ENCODE measurements at regions of chr13 and their contacts with region 1.

Region 1: GRCh38 chr13:37602747-37603381 is 4.3 kb upstream of the POSTN start:
- DNase-seq: no peak
- H3K4me3 ChIP-seq: no peak overlapping the region
- H3K27ac ChIP-seq: no peak overlapping the region
- H3K4me1 ChIP-seq: no peaks in the 10 kb centered on the region
- H3K27me3 ChIP-seq: no peaks in the 10 kb centered on the region
- CTCF ChIP-seq: peak in 3 of 4 experiments; percentile 41 to 52 (median 41)
- POLR2A ChIP-seq: no peak

Region 2: DNA sequence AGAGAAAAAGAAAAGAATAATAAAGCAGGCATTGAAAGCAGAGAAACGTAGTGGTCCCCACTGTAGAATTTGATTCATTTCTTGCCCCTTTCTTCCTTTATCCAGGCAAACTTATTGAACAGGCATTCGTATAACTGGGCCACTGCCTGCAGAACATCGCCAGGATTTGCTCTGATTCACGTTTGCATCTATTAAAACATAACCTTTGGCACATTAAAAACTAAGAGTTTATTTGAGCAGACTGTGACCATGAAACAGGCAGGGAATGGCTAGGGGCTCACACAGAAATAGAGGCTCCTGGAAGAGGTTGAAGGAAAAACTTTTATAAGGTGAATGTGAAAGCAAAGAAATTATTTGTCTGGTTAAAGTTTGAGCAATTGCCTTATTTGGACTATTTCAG is 530.8 kb before region 1 on chr13:
- intact Hi-C with region 1: loop called (anchors 2 kb)
- DNase-seq: no peak
- H3K4me3 ChIP-seq: no peak overlapping the region
- H3K27ac ChIP-seq: no peak overlapping the region
- H3K4me1 ChIP-seq: no peaks in the 10 kb centered on the region
- H3K27me3 ChIP-seq: no peaks in the 10 kb centered on the region
- CTCF ChIP-seq: no peak
- POLR2A ChIP-seq: no peak

Region 3: GRCh38 chr13:37109051-37109678 is 493.7 kb before region 1 on chr13:
- intact Hi-C with region 1: loop called (anchors 2 kb)
- DNase-seq: no peak
- H3K4me3 ChIP-seq: no peak overlapping the region
- H3K27ac ChIP-seq: no peak overlapping the region
- H3K4me1 ChIP-seq: no peaks in the 10 kb centered on the region
- H3K27me3 ChIP-seq: no peaks in the 10 kb centered on the region
- CTCF ChIP-seq: peak in 3 of 4 experiments; percentile 47 to 66 (median 49)
- POLR2A ChIP-seq: no peak

Measured in prostate gland (tissue), 2 donors.